Activated CD8-positive, alpha-beta T cell treated with anti-CD3 and anti-CD28 coated beads, Interleukin-2, amount 10 ng/mL, durations not matched to agents 7 days and 5 days (primary cell): ENCODE measurements at regions of chr15 and their contacts with region 1.

Region 1: GRCh38 chr15:59751552-59752413 is 62.7 kb upstream of the BNIP2 start:
- DNase-seq: no peak
- ATAC-seq: peak; percentile 90
- H3K4me3 Mint-ChIP-seq: no peak overlapping the region
- H3K27ac Mint-ChIP-seq: no peak overlapping the region
- H3K4me1 Mint-ChIP-seq: peaks cover 4% of the 10 kb centered on the region
- H3K27me3 Mint-ChIP-seq: peaks cover 10% of the 10 kb centered on the region

Region 2: DNA sequence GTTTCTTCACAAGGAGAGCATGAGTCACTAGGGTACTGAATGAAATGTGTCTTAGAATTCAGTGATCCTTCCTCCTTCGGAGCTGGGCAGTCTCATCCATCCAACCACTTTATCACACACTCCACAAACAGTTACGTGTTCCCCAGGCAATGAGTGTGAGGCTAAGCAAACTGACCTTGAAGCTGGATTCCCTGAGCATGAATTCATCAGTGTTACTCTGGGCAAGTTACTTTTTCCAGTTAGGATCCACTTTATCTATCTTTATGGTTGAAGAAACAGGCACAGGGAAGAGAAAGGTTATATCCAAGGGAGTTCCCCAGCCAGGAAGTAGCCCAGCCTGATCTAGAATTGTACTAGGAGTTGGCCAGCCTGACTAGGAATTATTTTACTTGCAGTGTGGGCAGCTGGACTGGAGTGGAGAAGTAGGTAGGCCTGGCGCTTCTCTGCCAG is 157.3 kb before region 1 on chr15:
- CTCF ChIA-PET with region 1: no interaction called
- POLR2A ChIA-PET with region 1: no interaction called
- DNase-seq: no peak
- ATAC-seq: no peak
- H3K4me3 Mint-ChIP-seq: no peak overlapping the region
- H3K27ac Mint-ChIP-seq: no peak overlapping the region
- H3K4me1 Mint-ChIP-seq: peaks cover 13% of the 10 kb centered on the region
- H3K27me3 Mint-ChIP-seq: peaks cover 23% of the 10 kb centered on the region

Region 3: DNA sequence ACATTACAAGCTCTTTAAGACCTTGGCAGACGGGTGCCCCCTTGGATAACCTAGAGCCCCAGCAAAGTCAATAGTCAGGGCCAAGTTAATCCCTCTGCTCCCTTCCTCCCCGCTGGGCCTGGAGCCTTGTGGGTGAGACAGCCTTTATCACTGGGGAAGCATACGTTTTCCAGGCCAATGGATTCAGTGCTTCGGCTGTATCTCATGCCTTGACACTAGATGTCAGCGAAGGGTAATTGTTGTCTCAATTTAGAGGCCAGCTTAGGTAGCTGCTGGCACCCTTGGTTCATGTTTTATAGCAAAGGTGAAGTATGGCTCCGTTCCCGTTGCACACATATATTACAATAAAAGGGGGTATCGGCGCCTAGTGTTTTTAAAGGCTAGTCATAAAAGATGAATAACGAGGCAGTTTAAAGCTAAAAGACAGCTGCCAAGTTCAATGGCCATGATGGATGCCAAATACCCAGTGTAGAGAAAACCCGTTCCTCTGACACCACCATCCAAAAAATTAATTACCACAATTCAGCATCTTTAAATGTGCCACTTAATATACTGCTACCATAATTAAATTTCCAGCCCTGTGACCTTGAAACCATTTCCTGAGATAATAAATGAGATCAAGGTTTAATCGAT is 10.4 kb before region 1 on chr15:
- CTCF ChIA-PET with region 1: interaction called, 14 read pairs
- POLR2A ChIA-PET with region 1: no interaction called
- DNase-seq: no peak
- ATAC-seq: no peak
- H3K4me3 Mint-ChIP-seq: no peak overlapping the region
- H3K27ac Mint-ChIP-seq: no peak overlapping the region
- H3K4me1 Mint-ChIP-seq: no peaks in the 10 kb centered on the region
- H3K27me3 Mint-ChIP-seq: peaks cover 8% of the 10 kb centered on the region

Region 4: DNA sequence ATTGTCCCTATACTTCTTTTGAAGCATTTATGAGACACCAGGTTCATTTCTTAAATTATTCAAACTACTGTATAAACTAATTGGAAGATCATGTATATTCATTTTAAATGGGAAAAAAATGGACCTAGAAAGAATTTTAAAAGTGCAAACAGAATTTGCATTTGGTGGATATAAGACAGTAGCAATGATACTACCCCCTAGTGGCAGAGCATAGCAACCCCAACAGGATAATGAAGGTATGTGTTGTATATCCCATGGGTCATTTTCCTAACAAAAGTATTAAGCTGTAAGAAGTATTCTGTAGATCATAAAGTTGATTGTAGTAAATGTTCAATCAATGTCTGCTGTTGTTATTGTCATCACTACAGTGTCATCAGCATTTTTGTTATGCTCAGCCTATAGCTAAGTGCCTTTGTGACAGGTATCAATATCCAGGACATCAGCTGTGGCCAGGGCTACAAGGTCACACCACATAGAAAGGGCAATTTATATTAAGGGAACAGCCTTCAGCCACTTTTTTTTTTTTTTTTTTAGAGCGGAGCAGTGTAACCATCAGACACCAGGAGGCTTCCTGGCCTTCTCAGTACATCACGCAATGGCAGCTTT is 428.1 kb after region 1 on chr15:
- CTCF ChIA-PET with region 1: interaction called, 21 read pairs
- POLR2A ChIA-PET with region 1: no interaction called
- DNase-seq: peak; percentile 55
- ATAC-seq: no peak
- H3K4me3 Mint-ChIP-seq: no peak overlapping the region
- H3K27ac Mint-ChIP-seq: no peak overlapping the region
- H3K4me1 Mint-ChIP-seq: no peaks in the 10 kb centered on the region
- H3K27me3 Mint-ChIP-seq: peaks cover 23% of the 10 kb centered on the region